ENCODE measurements at regions of chr1 and their contacts with region 1.

Region 1: GRCh38 chr1:76154206-76154956 is 79.8 kb downstream of the ST6GALNAC3 start:
- DNase-seq: peak; percentile 59
- ATAC-seq: peak; percentile 99
- H3K4me3 ChIP-seq: peak overlapping the region in 2 of 3 experiments; percentile 35 to 51; a peak in 3 of 6 replicates
- H3K27ac ChIP-seq: no peak overlapping the region
- H3K4me1 ChIP-seq: peaks cover 10% of the 10 kb centered on the region
- H3K27me3 ChIP-seq: no peaks in the 10 kb centered on the region; a peak in 1 of 5 replicates
- CTCF ChIP-seq: peak; percentile 93
- EP300 ChIP-seq: no peak
- POLR2A ChIP-seq: no peak
- RAD21 ChIP-seq: peak; percentile 72

Region 2: GRCh38 chr1:76330991-76331603 is 176.7 kb after region 1 on chr1:
- CTCF ChIA-PET with region 1: no interaction called
- POLR2A ChIA-PET with region 1: no interaction called
- in situ Hi-C with region 1: no loop called
- intact Hi-C with region 1: loop called (anchors 5 kb)
- DNase-seq: peak; percentile 18
- ATAC-seq: peak; percentile 82
- H3K4me3 ChIP-seq: no peak overlapping the region
- H3K27ac ChIP-seq: no peak overlapping the region
- H3K4me1 ChIP-seq: no peaks in the 10 kb centered on the region
- H3K27me3 ChIP-seq: no peaks in the 10 kb centered on the region; a peak in 1 of 5 replicates
- CTCF ChIP-seq: peak; percentile 73
- EP300 ChIP-seq: no peak
- POLR2A ChIP-seq: no peak
- RAD21 ChIP-seq: no peak

Region 3: GRCh38 chr1:76746206-76746605 is 591.8 kb after region 1 on chr1:
- CTCF ChIA-PET with region 1: no interaction called
- POLR2A ChIA-PET with region 1: no interaction called
- in situ Hi-C with region 1: no loop called
- intact Hi-C with region 1: loop called (anchors 1 kb)
- DNase-seq: no peak
- ATAC-seq: no peak
- H3K4me3 ChIP-seq: no peak overlapping the region
- H3K27ac ChIP-seq: no peak overlapping the region
- H3K4me1 ChIP-seq: no peaks in the 10 kb centered on the region
- H3K27me3 ChIP-seq: no peaks in the 10 kb centered on the region; a peak in 1 of 5 replicates
- CTCF ChIP-seq: no peak
- EP300 ChIP-seq: no peak
- POLR2A ChIP-seq: no peak
- RAD21 ChIP-seq: no peak

Region 4: DNA sequence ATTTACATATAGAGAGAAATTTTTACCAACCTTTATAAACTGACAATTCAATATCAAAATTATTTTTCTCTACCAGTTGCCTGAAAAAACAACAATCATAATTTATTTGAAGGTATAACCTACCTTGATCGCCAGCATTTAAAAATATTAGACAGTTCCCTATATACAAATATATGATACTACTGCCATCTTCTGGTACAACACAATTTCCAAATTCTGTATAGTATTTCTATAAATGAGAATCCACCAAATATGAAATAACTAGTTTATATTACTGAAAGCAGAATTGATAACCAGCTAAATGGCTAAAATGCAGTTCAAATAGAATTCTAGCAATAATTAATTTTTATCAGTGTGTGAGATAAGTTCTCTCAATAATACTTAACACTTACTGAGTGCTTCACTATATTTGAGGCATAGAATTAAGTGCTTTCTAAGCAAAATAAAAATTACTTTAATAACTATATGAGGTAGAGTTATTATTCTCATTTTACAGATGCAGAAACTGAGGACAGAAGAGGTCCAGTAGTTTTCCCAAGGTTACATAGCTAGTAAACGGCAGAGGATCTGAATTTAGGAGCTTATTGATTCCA is 989.2 kb after region 1 on chr1:
- CTCF ChIA-PET with region 1: interaction called, 11 read pairs
- POLR2A ChIA-PET with region 1: no interaction called
- in situ Hi-C with region 1: loop called (anchors 5 kb)
- intact Hi-C with region 1: loop called (anchors 1 kb)
- DNase-seq: no peak
- ATAC-seq: no peak
- H3K4me3 ChIP-seq: no peak overlapping the region
- H3K27ac ChIP-seq: no peak overlapping the region
- H3K4me1 ChIP-seq: no peaks in the 10 kb centered on the region
- H3K27me3 ChIP-seq: no peaks in the 10 kb centered on the region
- CTCF ChIP-seq: peak; percentile 10; the same call in 1 of the 2 replicates
- EP300 ChIP-seq: no peak
- POLR2A ChIP-seq: no peak
- RAD21 ChIP-seq: no peak

Measured in HepG2 (cell line).